GM13977 (cell line): ENCODE measurements at regions of chr7 and their contacts with region 1.

Region 1: GRCh38 chr7:26199301-26200037 is 1.1 kb downstream of the HNRNPA2B1 start:
- DNase-seq: no peak
- CTCF ChIP-seq: no peak

Region 2: GRCh38 chr7:25968205-25968993 is 231.1 kb before region 1 on chr7:
- in situ Hi-C with region 1: loop called (anchors 10 kb)
- DNase-seq: peak; percentile 52
- CTCF ChIP-seq: peak; percentile 21

Region 3: GRCh38 chr7:26090927-26091519 is 108.4 kb before region 1 on chr7:
- in situ Hi-C with region 1: loop called (anchors 5 kb)
- DNase-seq: peak; percentile 48
- CTCF ChIP-seq: peak; percentile 62

Region 4: GRCh38 chr7:26356929-26357798 is 157.7 kb after region 1 on chr7:
- in situ Hi-C with region 1: no loop called
- DNase-seq: no peak
- CTCF ChIP-seq: no peak